Naive thymus-derived CD4-positive, alpha-beta T cell (primary cell): ENCODE measurements at regions of chr14 and their contacts with region 1.

Region 1: DNA sequence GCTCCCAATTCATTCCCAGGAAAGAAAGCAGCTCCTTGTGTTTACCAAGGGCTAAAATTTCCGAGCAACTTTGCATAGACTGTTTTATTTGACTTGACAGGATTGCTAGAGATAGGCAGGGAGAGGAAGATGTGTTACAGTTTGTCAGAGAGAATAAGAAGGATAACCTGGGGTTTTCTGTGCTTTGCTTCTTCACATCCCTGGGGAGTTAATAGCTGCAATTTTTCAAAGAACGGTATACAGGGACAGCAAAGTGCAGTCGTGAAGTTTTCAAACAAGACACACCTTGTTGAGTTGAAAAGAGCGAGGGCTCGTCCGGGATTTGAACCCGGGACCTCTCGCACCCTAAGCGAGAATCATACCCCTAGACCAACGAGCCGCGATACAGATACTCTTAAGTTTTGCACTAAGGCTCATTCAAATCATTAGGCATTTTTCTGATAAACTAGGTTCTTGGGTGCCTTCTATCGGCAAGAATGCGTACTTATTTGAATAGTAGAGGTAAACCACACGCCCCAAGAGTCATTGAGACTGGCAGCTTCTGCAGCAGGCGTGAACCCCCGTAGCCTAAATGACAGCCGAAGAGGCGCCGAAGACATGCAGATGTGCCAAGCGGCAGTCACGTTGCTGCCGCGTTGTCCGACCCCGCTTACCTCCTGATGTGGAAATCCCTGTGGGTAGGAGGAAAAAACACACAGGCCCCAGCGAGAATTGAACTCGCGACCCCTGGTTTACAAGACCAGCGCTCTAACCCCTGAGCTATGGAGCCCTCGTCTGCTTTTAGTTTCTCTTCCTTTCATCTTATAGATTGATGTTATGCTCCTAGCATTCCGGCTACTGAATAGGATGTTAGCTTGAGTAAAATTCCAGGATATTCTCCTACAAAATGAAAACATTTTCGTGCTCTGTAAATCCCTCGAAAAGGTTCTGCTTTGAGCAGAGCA is 22.2 kb upstream of the RNASE12 start:
- DNase-seq: peak; percentile 61 to 95 (median 92)
- ATAC-seq: peak; percentile 89
- H3K4me3 ChIP-seq: peak overlapping the region; percentile 64
- H3K4me3 Mint-ChIP-seq: no peak overlapping the region
- H3K27ac ChIP-seq: peak overlapping the region; percentile 30
- H3K27ac Mint-ChIP-seq: no peak overlapping the region
- H3K4me1 ChIP-seq: peaks cover 20 to 29% of the 10 kb centered on the region in 2 donors
- H3K4me1 Mint-ChIP-seq: peaks cover 0 to 26% (median 4%) of the 10 kb centered on the region in 7 donors
- H3K27me3 ChIP-seq: no peaks in the 10 kb centered on the region
- H3K27me3 Mint-ChIP-seq: peaks cover 0 to 6% (median 0%) of the 10 kb centered on the region in 5 donors

Region 2: DNA sequence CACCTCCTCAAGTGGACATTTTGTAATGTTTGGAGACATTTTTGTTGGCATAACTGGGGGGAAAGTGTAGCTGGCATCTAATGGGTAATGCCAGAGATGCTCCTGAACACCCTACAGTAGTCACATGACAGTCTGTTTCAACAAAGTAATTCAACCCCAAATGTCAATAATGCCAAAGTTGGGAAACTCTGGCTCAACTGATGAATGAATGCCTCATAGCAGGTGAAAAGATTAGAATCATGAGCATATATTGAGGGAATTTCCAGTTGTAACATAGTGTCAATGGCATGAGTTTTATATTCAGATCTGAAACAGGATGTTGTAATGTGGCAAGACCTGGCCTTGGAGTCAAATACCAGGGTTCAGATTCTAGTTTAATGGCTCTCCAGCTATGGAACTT is 695.3 kb before region 1 on chr14:
- CTCF ChIA-PET with region 1: no interaction called
- POLR2A ChIA-PET with region 1: no interaction called
- intact Hi-C with region 1: no loop called
- DNase-seq: no peak
- ATAC-seq: no peak
- H3K4me3 ChIP-seq: no peak overlapping the region
- H3K4me3 Mint-ChIP-seq: no peak overlapping the region
- H3K27ac ChIP-seq: no peak overlapping the region
- H3K27ac Mint-ChIP-seq: no peak overlapping the region
- H3K4me1 ChIP-seq: no peaks in the 10 kb centered on the region
- H3K4me1 Mint-ChIP-seq: no peaks in the 10 kb centered on the region
- H3K27me3 ChIP-seq: no peaks in the 10 kb centered on the region
- H3K27me3 Mint-ChIP-seq: no peaks in the 10 kb centered on the region

Region 3: DNA sequence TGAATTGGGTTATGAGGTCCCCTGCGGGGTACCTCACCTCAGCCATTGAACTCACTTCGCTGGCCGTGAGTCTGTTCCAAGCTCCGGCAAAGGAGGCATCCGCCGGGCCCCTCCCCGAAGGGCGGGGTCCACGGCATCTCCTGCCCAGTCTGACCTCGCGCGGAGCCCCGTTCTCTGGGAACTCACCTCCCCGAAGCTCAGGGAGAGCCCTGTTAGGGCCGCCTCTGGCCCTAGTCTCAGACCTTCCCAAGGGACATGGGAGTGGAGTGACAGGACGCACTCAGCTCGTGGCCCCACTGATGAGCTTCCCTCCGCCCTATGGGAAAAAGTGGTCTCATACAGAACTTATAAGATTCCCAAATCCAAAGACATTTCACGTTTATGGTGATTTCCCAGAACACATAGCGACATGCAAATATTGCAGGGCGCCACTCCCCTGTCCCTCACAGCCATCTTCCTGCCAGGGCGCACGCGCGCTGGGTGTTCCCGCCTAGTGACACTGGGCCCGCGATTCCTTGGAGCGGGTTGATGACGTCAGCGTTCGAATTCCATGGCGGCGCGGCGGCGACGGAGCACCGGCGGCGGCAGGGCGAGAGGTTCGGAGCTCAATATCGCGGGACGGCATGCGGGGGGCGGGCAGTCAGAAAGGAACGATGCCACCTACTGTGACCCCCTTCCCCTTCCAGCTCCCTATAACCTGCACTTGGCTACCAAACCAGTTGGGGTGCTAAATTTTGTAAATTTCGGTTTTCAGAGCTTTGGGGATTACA is 270.1 kb before region 1 on chr14 and contains the start of gene PARP2:
- CTCF ChIA-PET with region 1: interaction called, 6 read pairs
- POLR2A ChIA-PET with region 1: interaction called, 17 read pairs
- intact Hi-C with region 1: loop called (anchors 1 kb)
- DNase-seq: peak; percentile 82 to 94 (median 93)
- ATAC-seq: peak; percentile 86
- H3K4me3 ChIP-seq: peak within 1 kb of the TSS; percentile 74
- H3K4me3 Mint-ChIP-seq: peak within 1 kb of the TSS; percentile 82 to 99 (median 95)
- H3K27ac ChIP-seq: peak within 1 kb of the TSS; percentile 91
- H3K27ac Mint-ChIP-seq: peak within 1 kb of the TSS; percentile 91 to 98 (median 97)
- H3K4me1 ChIP-seq: peaks cover 4 to 5% of the 10 kb centered on the region in 2 donors
- H3K4me1 Mint-ChIP-seq: peaks cover 6 to 27% (median 18%) of the 10 kb centered on the region in 7 donors
- H3K27me3 ChIP-seq: no peaks in the 10 kb centered on the region
- H3K27me3 Mint-ChIP-seq: peaks cover 0 to 7% (median 0%) of the 10 kb centered on the region in 5 donors
- total RNA-seq, gene PARP2: 15.3 to 24.5 (median 21.3) TPM

Region 4: GRCh38 chr14:20469242-20469889 is 144.0 kb before region 1 on chr14 and contains the start of gene PNP:
- CTCF ChIA-PET with region 1: interaction called, 4 read pairs
- POLR2A ChIA-PET with region 1: interaction called, 4 read pairs
- intact Hi-C with region 1: loop called (anchors 1 to 2 kb)
- DNase-seq: peak; percentile 74 to 88 (median 84)
- ATAC-seq: peak; percentile 94
- H3K4me3 ChIP-seq: peak within 1 kb of the TSS; percentile 87
- H3K4me3 Mint-ChIP-seq: peak within 1 kb of the TSS; percentile 95 to 100 (median 99)
- H3K27ac ChIP-seq: peak within 1 kb of the TSS; percentile 87
- H3K27ac Mint-ChIP-seq: peak within 1 kb of the TSS; percentile 89 to 98 (median 97)
- H3K4me1 ChIP-seq: peaks cover 13 to 32% of the 10 kb centered on the region in 2 donors
- H3K4me1 Mint-ChIP-seq: peaks cover 40 to 49% (median 43%) of the 10 kb centered on the region in 7 donors
- H3K27me3 ChIP-seq: no peaks in the 10 kb centered on the region
- H3K27me3 Mint-ChIP-seq: peaks cover 0 to 6% (median 0%) of the 10 kb centered on the region in 5 donors
- total RNA-seq, gene PNP: 58.9 to 179 (median 83.0) TPM

Region 5: DNA sequence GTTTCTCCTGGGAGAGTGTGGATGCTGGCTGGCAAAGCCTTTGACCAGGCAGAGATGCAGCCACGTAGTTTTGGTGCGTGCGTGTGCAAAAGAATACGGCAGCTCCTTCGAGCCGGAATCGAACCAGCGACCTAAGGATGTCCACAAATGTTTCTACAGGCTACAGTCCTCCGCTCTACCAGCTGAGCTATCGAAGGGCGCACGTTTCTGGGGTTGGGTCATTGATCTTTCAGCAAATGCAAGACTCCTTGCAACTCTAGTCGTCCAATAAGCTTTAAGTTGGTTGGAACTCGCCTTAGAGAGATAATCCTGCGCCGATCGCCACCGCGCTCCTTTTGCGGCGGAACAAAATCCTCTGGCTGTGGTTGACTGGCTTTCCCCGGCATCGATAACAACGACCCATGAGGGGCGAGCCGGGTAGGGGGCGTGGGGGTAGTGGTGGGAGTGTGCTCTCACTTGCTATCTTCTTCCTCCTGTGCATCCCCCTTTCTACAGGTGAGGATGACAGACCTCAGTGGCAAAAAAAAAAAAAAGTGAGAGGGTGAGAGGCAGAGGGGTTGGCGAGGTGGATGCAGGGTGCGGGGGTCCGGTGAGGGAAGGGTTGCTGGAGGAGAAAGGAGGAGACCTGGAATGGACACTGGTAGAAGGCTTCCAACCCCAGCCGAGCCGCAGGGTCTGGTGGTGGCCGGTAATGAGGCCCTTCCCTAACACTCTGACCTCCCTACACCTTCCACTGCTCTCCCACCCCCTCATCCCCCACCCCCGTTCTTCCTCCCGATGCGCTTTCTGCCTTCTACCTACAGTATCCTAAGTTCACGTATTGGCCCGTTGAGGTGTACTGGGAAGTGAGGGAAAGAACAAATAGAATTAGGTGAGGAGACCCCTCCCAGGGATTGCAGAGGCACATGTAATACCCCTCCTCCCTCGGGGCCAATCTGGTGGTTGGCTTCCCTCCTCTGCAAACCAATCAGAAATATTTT is 39.9 kb after region 1 on chr14:
- CTCF ChIA-PET with region 1: interaction called, 3 read pairs
- POLR2A ChIA-PET with region 1: no interaction called
- intact Hi-C with region 1: loop called (anchors 2 to 5 kb)
- DNase-seq: peak in 8 of 9 donors; percentile 22 to 61 (median 36)
- ATAC-seq: peak; percentile 56
- H3K4me3 ChIP-seq: no peak overlapping the region
- H3K4me3 Mint-ChIP-seq: peak overlapping the region; percentile 43 to 73 (median 61)
- H3K27ac ChIP-seq: no peak overlapping the region
- H3K27ac Mint-ChIP-seq: peak overlapping the region in 1 of 9 donors; percentile 69
- H3K4me1 ChIP-seq: peaks cover 0 to 6% of the 10 kb centered on the region in 2 donors
- H3K4me1 Mint-ChIP-seq: peaks cover 18 to 34% (median 31%) of the 10 kb centered on the region in 7 donors
- H3K27me3 ChIP-seq: peaks cover 9 to 25% of the 10 kb centered on the region in 2 donors
- H3K27me3 Mint-ChIP-seq: peaks cover 71 to 78% (median 73%) of the 10 kb centered on the region in 5 donors

Region 6: DNA sequence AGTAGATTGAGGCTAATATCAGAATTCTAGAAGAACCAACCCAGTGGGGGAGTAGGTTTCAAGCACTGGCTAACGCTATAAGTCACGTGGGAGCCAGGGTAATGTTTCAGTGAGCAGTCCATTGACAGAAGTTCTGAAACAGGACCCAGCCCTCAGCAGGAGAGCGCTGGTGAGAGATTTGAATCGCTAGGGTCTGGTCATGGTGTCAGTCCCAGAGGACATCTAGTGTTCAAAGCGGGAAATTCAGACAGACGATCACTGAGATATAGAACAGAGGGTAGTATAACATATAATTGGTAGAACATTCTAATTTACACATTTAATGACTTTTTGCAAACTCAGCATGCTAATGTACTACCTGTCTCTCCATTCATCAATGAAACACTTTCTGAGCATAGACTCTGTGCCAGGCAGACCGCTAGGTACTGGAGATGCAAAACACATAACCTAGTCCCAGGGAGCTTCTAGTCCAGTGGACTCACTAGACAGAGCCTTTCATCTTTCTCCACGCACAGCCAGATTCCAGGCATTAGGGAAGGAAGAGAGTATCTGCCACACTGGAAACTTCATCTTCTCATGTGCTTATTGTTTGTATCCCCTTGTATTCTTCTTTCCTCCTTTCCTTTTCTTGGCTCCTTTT is 242.4 kb after region 1 on chr14:
- CTCF ChIA-PET with region 1: no interaction called
- POLR2A ChIA-PET with region 1: no interaction called
- intact Hi-C with region 1: loop called in 1 of 2 experiments (anchors 5 kb)
- DNase-seq: peak in 7 of 9 donors; percentile 25 to 64 (median 47)
- ATAC-seq: peak; percentile 89
- H3K4me3 ChIP-seq: no peak overlapping the region
- H3K4me3 Mint-ChIP-seq: no peak overlapping the region
- H3K27ac ChIP-seq: no peak overlapping the region
- H3K27ac Mint-ChIP-seq: no peak overlapping the region
- H3K4me1 ChIP-seq: no peaks in the 10 kb centered on the region
- H3K4me1 Mint-ChIP-seq: peaks cover 0 to 7% (median 0%) of the 10 kb centered on the region in 7 donors
- H3K27me3 ChIP-seq: no peaks in the 10 kb centered on the region
- H3K27me3 Mint-ChIP-seq: peaks cover 13 to 35% (median 28%) of the 10 kb centered on the region in 5 donors

Region 7: GRCh38 chr14:21383848-21384493 is 770.6 kb after region 1 on chr14 and contains the start of gene SUPT16H:
- CTCF ChIA-PET with region 1: no interaction called
- POLR2A ChIA-PET with region 1: no interaction called
- intact Hi-C with region 1: loop called in 1 of 2 experiments (anchors 5 kb)
- DNase-seq: peak; percentile 78 to 91 (median 86)
- ATAC-seq: peak; percentile 97
- H3K4me3 ChIP-seq: peak within 1 kb of the TSS; percentile 98
- H3K4me3 Mint-ChIP-seq: peak within 1 kb of the TSS; percentile 92 to 99 (median 97)
- H3K27ac ChIP-seq: peak within 1 kb of the TSS; percentile 87
- H3K27ac Mint-ChIP-seq: peak within 1 kb of the TSS; percentile 97 to 100 (median 99)
- H3K4me1 ChIP-seq: peaks cover 3 to 11% of the 10 kb centered on the region in 2 donors
- H3K4me1 Mint-ChIP-seq: peaks cover 26 to 52% (median 45%) of the 10 kb centered on the region in 7 donors
- H3K27me3 ChIP-seq: no peaks in the 10 kb centered on the region
- H3K27me3 Mint-ChIP-seq: no peaks in the 10 kb centered on the region
- total RNA-seq, gene SUPT16H: 46.1 to 104 (median 78.6) TPM